HCT116 (cell line): ENCODE measurements at regions of chr4 and their contacts with region 1.

Region 1: DNA sequence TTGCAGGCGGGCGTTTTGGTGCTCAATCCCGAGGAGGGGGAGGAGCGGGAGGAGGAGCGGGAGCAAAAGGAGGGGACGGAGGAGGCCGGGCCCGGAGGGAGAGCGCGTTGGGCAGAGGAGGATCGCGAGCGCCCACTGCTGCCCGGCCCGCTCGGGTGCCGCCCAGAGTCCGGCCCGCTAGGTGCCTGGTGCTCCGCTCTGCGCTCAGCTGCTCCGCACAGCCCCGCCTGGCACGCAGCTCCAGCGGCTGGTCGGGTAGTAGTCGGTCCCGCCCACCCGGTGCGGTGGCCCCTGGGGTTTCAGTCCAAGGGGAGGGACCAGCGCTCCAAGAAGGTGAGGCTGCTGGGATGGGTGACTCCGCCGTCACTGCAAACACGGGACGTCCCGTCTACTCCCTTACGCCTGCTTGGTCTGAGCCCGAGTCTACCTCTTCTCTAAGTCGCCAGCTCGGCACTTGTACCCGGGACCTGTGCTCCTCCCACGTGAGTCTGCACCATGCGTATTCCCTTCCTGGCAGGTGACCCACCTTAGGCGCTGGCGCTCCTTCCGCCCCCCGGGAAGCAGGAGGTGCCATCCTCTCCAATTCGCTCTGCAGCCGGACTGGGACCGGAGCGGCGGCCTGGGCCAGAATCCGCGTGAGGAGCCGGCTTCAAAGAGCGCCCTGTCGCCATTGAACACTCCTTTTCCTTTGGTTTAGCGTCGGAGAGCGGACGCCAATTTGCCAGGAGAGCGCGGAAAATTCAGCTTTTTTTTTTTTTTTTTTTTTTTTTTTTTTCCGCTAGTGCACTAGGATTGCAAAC is 405 bp upstream of the HS3ST1 start:
- DNase-seq: peak; percentile 94
- ATAC-seq: peak; percentile 91
- H3K4me3 ChIP-seq: peak overlapping the region; percentile 91 to 94
- H3K27ac ChIP-seq: peak overlapping the region; percentile 90
- H3K4me1 ChIP-seq: peaks cover 46 to 73% of the 10 kb centered on the region in 2 experiments
- H3K27me3 ChIP-seq: no peaks in the 10 kb centered on the region
- CTCF ChIP-seq: peak in 2 of 3 experiments; percentile 65 to 80; a peak in 4 of 6 replicates
- POLR2A ChIP-seq: peak; percentile 54
- RAD21 ChIP-seq: no peak

Region 2: DNA sequence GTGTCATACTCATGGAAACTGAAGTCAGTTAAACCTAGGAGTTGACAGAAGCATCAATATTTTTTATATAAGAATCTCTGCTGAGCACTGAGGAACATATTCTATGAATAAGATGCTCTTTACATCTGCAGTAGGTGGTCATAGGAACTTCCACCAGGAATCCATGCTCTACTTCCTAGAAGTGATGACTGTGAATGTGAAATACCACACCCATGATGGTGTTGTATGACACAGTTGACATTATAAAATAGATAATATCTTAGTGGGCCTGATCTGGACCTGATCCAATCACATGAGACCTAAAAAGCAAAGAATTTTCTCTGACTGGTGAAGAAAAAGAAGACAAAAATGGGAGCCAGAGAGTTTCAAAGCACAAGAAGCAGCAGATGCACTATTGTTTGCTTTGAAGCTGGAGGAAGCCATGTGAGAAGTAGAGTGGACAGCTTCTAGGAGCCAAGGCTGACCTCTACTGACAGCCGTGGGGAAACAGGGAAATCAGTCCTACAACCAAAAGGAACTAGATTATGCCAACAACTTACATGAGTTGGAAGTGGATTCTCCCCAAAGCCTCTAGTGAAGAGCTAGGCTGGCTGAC is 68.2 kb after region 1 on chr4:
- CTCF ChIA-PET with region 1: interaction called, 4 read pairs
- POLR2A ChIA-PET with region 1: no interaction called
- RAD21 ChIA-PET with region 1: no interaction called
- intact Hi-C with region 1: loop called (anchors 2 kb)
- DNase-seq: no peak
- ATAC-seq: peak; percentile 76
- H3K4me3 ChIP-seq: no peak overlapping the region
- H3K27ac ChIP-seq: peak overlapping the region; percentile 72
- H3K4me1 ChIP-seq: peaks cover 24 to 44% of the 10 kb centered on the region in 2 experiments
- H3K27me3 ChIP-seq: no peaks in the 10 kb centered on the region
- CTCF ChIP-seq: peak in 2 of 3 experiments; percentile 51 to 61; a peak in 4 of 6 replicates
- POLR2A ChIP-seq: no peak
- RAD21 ChIP-seq: no peak

Region 3: DNA sequence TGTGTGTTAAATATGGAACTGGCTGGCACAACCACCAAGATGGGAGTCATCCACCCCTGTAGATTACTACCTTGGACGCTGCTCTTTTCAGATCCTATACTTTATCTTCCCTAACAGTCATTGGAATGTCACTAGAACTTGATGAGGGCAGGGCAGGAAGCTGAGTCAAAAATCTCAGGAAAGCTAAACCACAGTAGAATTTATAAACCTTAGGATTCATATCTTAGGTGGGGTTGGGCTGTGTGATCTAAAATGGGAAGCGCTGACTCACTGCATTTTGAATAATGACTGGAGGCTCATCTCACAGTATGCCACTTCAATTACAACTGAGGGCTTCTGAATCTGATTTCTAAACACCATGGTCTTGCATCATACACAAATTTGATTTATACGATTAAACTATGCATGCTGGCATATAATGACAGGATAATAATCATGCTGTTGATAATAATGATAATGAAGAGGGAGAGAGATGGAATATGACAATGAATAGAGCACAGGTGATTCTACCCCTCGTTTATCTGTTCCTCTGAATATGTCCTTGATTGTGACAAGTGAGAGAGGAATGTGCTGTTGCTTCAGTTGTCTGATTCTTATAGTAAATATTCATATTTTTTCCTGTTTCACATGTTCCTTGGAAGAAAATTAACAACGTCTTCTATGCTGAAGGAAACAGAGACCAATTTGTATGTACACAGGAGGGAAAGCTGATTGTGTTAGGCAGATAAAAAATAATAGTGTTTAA is 269.9 kb after region 1 on chr4:
- CTCF ChIA-PET with region 1: no interaction called
- POLR2A ChIA-PET with region 1: interaction called, 3 read pairs
- RAD21 ChIA-PET with region 1: interaction called in 1 of 2 experiments, 3 read pairs
- intact Hi-C with region 1: loop called (anchors 1 kb)
- DNase-seq: peak; percentile 95
- ATAC-seq: peak; percentile 87
- H3K4me3 ChIP-seq: peak overlapping the region in 1 of 2 experiments; percentile 3; a peak in 1 of 4 replicates
- H3K27ac ChIP-seq: peak overlapping the region; percentile 97
- H3K4me1 ChIP-seq: peaks cover 51 to 81% of the 10 kb centered on the region in 2 experiments
- H3K27me3 ChIP-seq: no peaks in the 10 kb centered on the region
- CTCF ChIP-seq: no peak
- POLR2A ChIP-seq: peak; percentile 22
- RAD21 ChIP-seq: peak; percentile 37; the same call in 1 of the 2 replicates

Region 4: GRCh38 chr4:11954093-11954492 is 525.0 kb after region 1 on chr4:
- CTCF ChIA-PET with region 1: no interaction called
- POLR2A ChIA-PET with region 1: no interaction called
- RAD21 ChIA-PET with region 1: no interaction called
- intact Hi-C with region 1: loop called (anchors 10 kb)
- DNase-seq: peak; percentile 44
- ATAC-seq: peak; percentile 72
- H3K4me3 ChIP-seq: no peak overlapping the region
- H3K27ac ChIP-seq: no peak overlapping the region
- H3K4me1 ChIP-seq: peaks cover 0 to 10% of the 10 kb centered on the region in 2 experiments; a peak in 2 of 4 replicates
- H3K27me3 ChIP-seq: no peaks in the 10 kb centered on the region
- CTCF ChIP-seq: peak; percentile 56 to 71 (median 71); a peak in 5 of 6 replicates
- POLR2A ChIP-seq: no peak
- RAD21 ChIP-seq: peak; percentile 74